Ascending aorta (tissue), 2 donors: ENCODE measurements at regions of chr14 and their contacts with region 1.

Region 1: GRCh38 chr14:74712499-74713394 is at the starts of genes AREL1 and FCF1:
- DNase-seq: peak; percentile 33 to 92
- H3K4me3 ChIP-seq: peak within 1 kb of the TSS; percentile 79 to 80
- H3K27ac ChIP-seq: peak within 1 kb of the TSS; percentile 69 to 88
- H3K4me1 ChIP-seq: peaks cover 0 to 13% of the 10 kb centered on the region in 2 donors
- H3K27me3 ChIP-seq: no peaks in the 10 kb centered on the region
- CTCF ChIP-seq: no peak
- total RNA-seq, gene AREL1: 17.9 TPM
- total RNA-seq, gene FCF1: 10.0 TPM

Region 2: GRCh38 chr14:74501135-74501614 is 211.6 kb before region 1 on chr14:
- intact Hi-C with region 1: loop called (anchors 2 kb)
- DNase-seq: peak in 1 of 2 donors; percentile 82
- H3K4me3 ChIP-seq: no peak overlapping the region
- H3K27ac ChIP-seq: peak overlapping the region; percentile 37 to 55
- H3K4me1 ChIP-seq: no peaks in the 10 kb centered on the region
- H3K27me3 ChIP-seq: no peaks in the 10 kb centered on the region
- CTCF ChIP-seq: peak; percentile 31 to 68 (median 59)

Region 3: DNA sequence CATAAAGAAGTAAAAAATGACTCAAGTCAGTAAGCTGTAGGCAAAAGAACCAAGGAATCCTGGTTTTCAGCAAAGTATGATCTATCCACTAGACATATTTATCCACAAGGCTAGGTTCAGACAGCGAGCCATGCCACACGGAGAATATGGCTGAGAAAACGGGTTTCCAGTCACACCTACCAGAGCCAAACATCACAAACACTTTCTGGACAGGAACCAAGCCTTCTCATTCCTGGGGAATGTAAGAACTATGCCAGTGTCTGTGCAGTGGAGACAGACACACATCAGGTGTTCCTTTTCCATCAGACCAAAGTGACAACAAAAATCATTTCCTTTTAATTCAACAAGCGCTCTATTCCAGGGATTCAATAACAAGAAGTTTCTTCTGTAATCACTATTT is 41.0 kb before region 1 on chr14:
- intact Hi-C with region 1: loop called (anchors 1 kb)
- DNase-seq: peak in 1 of 2 donors; percentile 77
- H3K4me3 ChIP-seq: no peak overlapping the region
- H3K27ac ChIP-seq: peak overlapping the region; percentile 78 to 87
- H3K4me1 ChIP-seq: peaks cover 3 to 15% of the 10 kb centered on the region in 2 donors
- H3K27me3 ChIP-seq: no peaks in the 10 kb centered on the region
- CTCF ChIP-seq: no peak

Region 4: DNA sequence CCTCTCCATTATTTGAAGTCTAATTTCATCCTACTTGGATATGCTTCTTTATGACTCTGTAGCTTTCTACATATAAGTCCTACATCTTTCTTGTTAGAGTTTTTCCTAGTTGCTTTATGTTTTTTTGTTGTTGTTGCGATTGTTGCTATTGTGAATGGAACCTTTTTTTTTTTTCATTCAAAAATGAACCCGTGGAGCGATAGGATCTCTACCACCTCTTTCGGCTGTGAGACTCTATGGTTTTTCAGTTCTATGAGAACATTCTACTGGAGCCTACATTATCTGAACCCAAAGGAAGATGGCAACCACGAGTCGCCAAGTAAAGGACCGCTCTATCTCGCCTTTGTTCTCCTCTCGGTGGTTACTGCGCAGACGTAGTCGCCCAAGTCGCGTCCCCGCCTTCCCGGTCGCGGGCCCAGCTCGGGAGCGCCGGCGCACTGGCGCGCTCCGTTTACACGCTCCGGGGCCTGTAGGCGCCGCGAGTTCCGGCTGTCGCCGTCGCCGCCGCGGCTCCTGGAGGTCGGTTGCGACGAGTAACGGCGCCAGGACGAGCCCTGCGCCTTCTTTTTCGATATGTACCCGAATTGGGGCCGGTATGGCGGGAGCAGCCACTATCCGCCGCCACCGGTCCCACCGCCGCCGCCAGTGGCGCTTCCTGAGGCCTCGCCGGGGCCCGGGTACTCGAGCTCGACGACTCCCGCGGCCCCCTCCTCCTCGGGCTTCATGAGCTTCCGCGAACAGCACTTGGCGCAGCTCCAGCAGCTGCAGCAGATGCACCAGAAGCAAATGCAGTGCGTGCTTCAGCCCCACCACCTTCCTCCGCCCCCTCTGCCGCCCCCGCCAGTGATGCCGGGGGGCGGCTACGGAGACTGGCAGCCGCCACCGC is 50.4 kb after region 1 on chr14 and contains the start of gene YLPM1:
- intact Hi-C with region 1: loop called (anchors 2 kb)
- DNase-seq: peak; percentile 66 to 96
- H3K4me3 ChIP-seq: peak within 1 kb of the TSS; percentile 73 to 100
- H3K27ac ChIP-seq: peak within 1 kb of the TSS; percentile 70 to 94
- H3K4me1 ChIP-seq: peaks cover 0 to 10% of the 10 kb centered on the region in 2 donors
- H3K27me3 ChIP-seq: no peaks in the 10 kb centered on the region
- CTCF ChIP-seq: peak; percentile 30 to 61 (median 50)
- total RNA-seq, gene YLPM1: 27.7 TPM

Region 5: DNA sequence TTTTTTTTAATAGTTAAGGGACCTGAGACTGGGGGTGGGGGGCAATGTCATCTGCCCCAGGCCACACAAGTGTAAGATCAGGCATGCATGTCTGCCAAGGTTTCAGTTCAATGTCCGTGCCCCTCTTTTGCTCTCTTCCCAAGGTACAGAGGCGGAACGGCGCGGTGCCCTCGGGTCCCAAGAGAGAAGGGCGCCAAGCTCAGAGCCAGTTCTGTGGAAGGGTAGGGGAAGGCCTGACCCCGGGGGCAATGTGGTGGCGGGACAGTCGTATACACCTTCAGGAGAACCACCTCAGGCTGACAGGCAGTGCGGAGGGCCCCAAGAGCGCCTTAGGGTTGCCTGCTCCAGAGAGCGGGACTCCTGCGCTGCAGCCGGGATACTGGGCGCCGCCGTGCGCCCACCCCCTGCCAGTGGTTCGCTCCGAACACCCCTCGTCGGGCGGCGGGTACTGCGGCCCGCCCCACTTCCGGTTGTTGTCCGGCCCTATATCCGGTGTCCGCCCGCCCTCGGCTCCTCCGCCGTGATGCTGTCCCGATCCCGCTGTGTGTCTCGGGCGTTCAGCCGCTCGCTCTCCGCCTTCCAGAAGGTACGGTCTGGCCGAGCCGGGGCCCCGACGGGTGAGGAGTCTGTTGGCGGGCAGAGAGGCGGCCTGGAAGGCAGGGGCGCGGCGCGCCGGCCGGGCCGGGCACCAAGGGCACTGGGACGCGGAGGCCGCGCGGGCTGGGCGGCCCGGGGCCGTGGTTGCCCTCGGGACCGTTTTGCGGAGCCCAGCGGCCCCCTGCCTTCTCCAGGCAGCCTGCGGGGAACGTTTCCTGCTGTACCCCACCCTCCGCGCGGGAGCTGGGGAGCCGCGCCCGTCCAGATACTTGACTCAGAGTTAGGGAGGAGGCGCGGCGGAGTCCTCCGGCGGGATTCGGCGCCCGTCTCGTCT is 168.9 kb after region 1 on chr14 and contains the start of gene DLST:
- intact Hi-C with region 1: no loop called
- DNase-seq: peak; percentile 29 to 90
- H3K4me3 ChIP-seq: peak within 1 kb of the TSS; percentile 87 to 95
- H3K27ac ChIP-seq: peak within 1 kb of the TSS; percentile 86 to 97
- H3K4me1 ChIP-seq: peaks cover 3 to 37% of the 10 kb centered on the region in 2 donors
- H3K27me3 ChIP-seq: no peaks in the 10 kb centered on the region
- CTCF ChIP-seq: peak in 1 of 3 experiments; percentile 18
- total RNA-seq, gene DLST: 59.7 TPM